ENCODE measurements at regions of chr1 and their contacts with region 1.

Region 1: GRCh38 chr1:51578383-51579082 is 38.4 kb upstream of the OSBPL9 start:
- DNase-seq: no peak
- ATAC-seq: peak; percentile 39
- H3K4me3 Mint-ChIP-seq: peak overlapping the region; percentile 40
- H3K27ac Mint-ChIP-seq: peak overlapping the region; percentile 86
- H3K4me1 Mint-ChIP-seq: peaks cover 56% of the 10 kb centered on the region
- H3K27me3 Mint-ChIP-seq: no peaks in the 10 kb centered on the region
- CTCF ChIP-seq: no peak

Region 2: GRCh38 chr1:50978144-50978851 is 600.2 kb before region 1 on chr1:
- CTCF ChIA-PET with region 1: no interaction called
- POLR2A ChIA-PET with region 1: interaction called, 12 read pairs
- intact Hi-C with region 1: no loop called
- DNase-seq: peak; percentile 52
- ATAC-seq: peak; percentile 29
- H3K4me3 Mint-ChIP-seq: peak overlapping the region; percentile 80
- H3K27ac Mint-ChIP-seq: peak overlapping the region; percentile 68
- H3K4me1 Mint-ChIP-seq: peaks cover 22% of the 10 kb centered on the region
- H3K27me3 Mint-ChIP-seq: peaks cover 18% of the 10 kb centered on the region
- CTCF ChIP-seq: no peak

Measured in activated B cell treated with CpG ODN at 0.5 μM for 24 hours (primary cell).